Colonic mucosa (tissue), 4 donors: ENCODE measurements at regions of chr15 and their contacts with region 1.

Region 1: DNA sequence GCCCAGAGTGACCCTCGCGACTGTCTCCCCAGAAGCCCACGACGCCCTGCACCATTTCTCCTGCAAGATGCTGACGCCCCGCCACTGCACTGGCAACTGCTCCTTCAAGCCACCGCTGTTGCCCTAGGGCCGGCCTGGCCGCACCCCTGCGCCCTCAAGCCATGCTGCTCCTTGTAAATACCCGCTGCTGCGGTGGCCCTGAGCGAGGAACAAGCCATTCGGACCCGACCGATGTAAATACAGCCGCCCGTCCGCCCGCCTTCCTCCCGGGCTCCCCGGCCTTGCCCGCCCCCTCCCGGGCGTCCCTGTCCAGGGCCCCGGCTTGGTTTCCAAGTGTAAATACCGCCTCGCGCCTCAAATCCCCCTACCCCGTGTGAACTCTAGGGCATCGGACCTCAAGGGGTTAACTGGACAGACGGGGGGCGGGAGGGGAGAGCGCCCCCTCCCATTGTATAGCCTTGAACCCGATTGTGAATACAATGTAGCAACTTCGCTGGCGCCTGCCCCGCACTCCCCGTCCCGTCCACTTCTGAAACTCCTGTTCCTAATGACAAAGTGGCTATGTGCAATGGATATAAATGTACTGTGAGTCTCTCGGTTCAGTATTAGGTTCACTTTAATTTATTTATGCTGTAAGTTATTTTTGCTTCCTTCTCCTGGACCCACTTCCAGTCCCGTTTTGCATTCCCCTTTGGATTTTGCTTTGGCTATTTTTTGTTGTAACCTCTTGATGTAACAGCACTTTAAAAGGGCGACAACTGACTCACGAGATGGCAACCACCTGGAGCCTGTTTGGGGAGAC is 5.9 kb downstream of the RNU6-1 start:
- DNase-seq: peak; percentile 55
- H3K4me3 ChIP-seq: peak overlapping the region; percentile 32
- H3K27ac ChIP-seq: no peak overlapping the region
- H3K4me1 ChIP-seq: peaks cover 29% of the 10 kb centered on the region
- H3K27me3 ChIP-seq: peaks cover 72% of the 10 kb centered on the region
- CTCF ChIP-seq: peak; percentile 44

Region 2: GRCh38 chr15:67456677-67457529 is 377.0 kb before region 1 on chr15:
- intact Hi-C with region 1: loop called (anchors 2 kb)
- DNase-seq: peak; percentile 86
- H3K4me3 ChIP-seq: no peak overlapping the region
- H3K27ac ChIP-seq: no peak overlapping the region
- H3K4me1 ChIP-seq: no peaks in the 10 kb centered on the region
- H3K27me3 ChIP-seq: no peaks in the 10 kb centered on the region
- CTCF ChIP-seq: peak; percentile 92

Region 3: GRCh38 chr15:67501836-67502461 is 332.0 kb before region 1 on chr15:
- intact Hi-C with region 1: loop called (anchors 2 kb)
- DNase-seq: no peak
- H3K4me3 ChIP-seq: no peak overlapping the region
- H3K27ac ChIP-seq: no peak overlapping the region
- H3K4me1 ChIP-seq: no peaks in the 10 kb centered on the region
- H3K27me3 ChIP-seq: no peaks in the 10 kb centered on the region
- CTCF ChIP-seq: no peak

Region 4: GRCh38 chr15:68097029-68097428 is 263.1 kb after region 1 on chr15:
- intact Hi-C with region 1: no loop called
- DNase-seq: no peak
- H3K4me3 ChIP-seq: no peak overlapping the region
- H3K27ac ChIP-seq: no peak overlapping the region
- H3K4me1 ChIP-seq: no peaks in the 10 kb centered on the region
- H3K27me3 ChIP-seq: no peaks in the 10 kb centered on the region
- CTCF ChIP-seq: no peak